Activated CD8-positive, alpha-beta T cell treated with anti-CD3 and anti-CD28 coated beads, Interleukin-2, amount 10 ng/mL, durations not matched to agents 7 days and 5 days (primary cell): ENCODE measurements at regions of chr16 and their contacts with region 1.

Region 1: DNA sequence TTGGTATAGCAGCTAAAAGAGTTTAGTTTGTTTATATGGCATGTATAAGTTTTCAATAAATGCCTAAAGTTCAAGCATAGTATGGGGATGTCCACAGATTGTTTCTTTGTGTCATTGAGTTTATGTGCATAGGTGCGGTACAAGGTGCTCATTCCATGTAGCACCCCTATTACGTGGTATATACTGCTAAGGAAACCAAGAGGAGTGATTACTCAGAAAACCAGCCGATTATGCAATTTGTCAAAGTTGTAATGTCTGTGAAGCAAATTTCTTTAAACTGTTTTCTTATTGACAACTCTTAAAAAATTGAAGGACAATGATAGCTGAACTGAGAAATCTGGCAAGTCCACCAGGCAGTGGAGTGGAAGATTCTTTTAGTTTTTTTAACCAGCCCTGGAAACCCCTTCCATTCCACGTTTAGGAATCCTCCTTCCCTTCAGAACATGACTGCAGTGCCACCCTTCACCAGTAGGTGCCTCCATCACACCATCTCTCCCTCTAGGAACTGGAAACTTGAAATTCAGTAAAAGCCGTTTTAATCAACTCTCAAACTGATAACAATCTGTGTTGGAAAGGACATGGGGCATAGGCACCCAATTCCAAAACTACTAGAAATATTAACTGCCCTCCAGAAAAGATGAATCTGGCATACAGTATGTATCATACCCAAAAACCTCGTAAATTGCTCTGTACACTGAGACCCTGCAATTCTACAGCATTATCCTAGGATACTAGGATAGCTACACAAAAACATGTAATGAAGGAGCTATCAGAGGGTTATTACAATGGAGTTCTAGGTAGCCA is 43.5 kb downstream of the REXO5 start:
- DNase-seq: peak; percentile 69
- ATAC-seq: peak; percentile 70
- H3K4me3 Mint-ChIP-seq: no peak overlapping the region
- H3K27ac Mint-ChIP-seq: no peak overlapping the region
- H3K4me1 Mint-ChIP-seq: peaks cover 41% of the 10 kb centered on the region
- H3K27me3 Mint-ChIP-seq: no peaks in the 10 kb centered on the region

Region 2: DNA sequence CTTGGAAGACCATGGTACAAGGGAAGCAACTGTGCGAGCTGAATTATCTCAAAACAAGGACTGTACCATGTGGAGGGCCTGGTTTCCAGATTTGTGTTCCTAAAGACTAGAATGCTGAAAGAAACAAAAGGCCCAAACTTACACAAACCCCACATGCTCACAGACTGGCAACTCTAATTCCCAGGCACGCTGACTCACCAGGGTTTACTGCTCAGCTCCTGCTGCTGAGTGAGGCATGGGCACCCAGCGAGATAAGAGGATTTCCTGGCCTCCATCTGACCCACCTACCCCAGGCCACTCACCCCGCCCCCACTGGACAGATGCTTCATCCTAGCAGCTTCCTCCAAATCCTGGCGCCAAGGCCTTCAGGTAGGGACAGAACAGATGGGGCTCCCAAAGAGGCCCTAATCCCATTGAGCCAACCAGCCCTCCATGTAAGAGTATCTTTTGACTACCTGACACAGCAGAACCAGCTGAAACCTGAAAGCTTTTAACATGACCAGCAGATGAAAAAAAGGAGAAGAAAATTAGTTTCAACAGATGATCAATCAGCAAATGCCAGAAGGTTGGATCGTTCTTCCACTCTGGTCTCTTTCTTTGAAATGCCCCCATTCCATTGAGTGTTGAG is 16.5 kb after region 1 on chr16:
- CTCF ChIA-PET with region 1: interaction called, 42 read pairs
- POLR2A ChIA-PET with region 1: no interaction called
- DNase-seq: no peak
- ATAC-seq: no peak
- H3K4me3 Mint-ChIP-seq: no peak overlapping the region
- H3K27ac Mint-ChIP-seq: peak overlapping the region; percentile 42
- H3K4me1 Mint-ChIP-seq: peaks cover 38% of the 10 kb centered on the region
- H3K27me3 Mint-ChIP-seq: no peaks in the 10 kb centered on the region

Region 3: DNA sequence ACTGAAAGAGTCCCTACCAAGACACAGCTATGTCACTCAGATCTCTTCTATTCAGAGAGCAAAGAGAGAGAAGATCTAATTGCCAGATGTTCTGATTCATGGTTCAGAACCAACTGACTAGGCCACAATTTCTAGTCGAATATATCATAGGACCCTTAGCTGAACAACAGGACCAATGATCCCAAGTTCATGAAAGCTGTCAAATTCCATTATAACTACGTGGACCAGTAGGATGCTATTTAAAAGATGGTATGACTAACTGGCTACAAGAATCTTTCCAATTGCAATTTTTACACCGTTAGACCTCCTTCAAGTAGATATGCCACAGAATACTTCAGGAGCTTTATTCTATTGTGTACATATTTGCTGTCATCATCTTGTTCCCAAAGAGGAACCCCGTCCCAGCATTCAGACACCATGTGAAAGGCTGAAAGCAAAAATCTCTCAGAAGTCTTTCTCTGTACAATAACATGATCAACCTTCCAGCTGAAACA is 24.3 kb after region 1 on chr16:
- CTCF ChIA-PET with region 1: interaction called, 42 read pairs
- POLR2A ChIA-PET with region 1: interaction called, 4 read pairs
- DNase-seq: no peak
- ATAC-seq: no peak
- H3K4me3 Mint-ChIP-seq: peak overlapping the region; percentile 70
- H3K27ac Mint-ChIP-seq: peak overlapping the region; percentile 97
- H3K4me1 Mint-ChIP-seq: peaks cover 78% of the 10 kb centered on the region
- H3K27me3 Mint-ChIP-seq: no peaks in the 10 kb centered on the region

Region 4: DNA sequence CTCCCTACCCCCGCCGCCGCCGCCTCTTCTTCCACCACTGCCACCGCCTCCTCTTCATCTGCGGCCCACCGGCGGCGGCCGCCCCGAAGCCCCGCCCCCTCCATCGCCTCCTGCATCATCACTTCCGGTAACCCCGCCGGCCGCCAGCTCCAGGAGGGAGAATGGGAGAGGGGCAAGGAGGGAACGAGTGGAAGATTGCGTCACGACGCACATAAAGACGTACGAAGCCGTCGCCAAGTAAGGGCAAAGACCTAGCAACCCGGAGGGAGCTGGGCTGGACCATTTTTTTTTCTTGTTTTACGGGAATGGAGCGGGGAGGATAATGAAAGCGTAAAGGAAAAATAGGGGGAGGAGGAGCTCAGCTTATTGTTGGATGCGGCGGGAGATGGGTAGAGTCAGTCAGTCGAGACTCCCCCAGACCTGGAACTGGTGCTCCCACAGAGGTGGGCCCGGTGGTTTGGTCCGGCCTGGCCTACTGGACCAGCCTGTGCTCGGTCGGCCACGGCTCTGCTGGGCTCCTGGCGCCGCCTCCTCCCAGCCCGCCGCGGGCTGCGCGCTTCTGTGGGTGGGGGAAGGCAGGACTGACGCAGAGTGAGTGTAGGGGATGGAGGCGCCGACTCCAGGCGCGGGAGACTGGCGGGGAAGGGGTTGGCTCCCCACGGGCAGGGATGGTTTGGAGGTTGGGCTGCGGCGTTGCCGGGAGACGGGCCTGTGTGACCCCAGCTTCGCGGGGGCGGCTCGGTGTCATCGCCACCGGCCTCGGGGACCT is 50.7 kb after region 1 on chr16 and contains the starts of genes DCUN1D3 and LYRM1:
- CTCF ChIA-PET with region 1: interaction called, 13 read pairs
- POLR2A ChIA-PET with region 1: interaction called, 7 read pairs
- DNase-seq: peak; percentile 93
- ATAC-seq: peak; percentile 81
- H3K4me3 Mint-ChIP-seq: peak within 1 kb of the TSS; percentile 83
- H3K27ac Mint-ChIP-seq: peak within 1 kb of the TSS; percentile 95
- H3K4me1 Mint-ChIP-seq: peaks cover 72% of the 10 kb centered on the region
- H3K27me3 Mint-ChIP-seq: no peaks in the 10 kb centered on the region
- total RNA-seq, gene DCUN1D3: 10.0 to 10.7 TPM
- total RNA-seq, gene LYRM1: 27.5 to 28.0 TPM

Region 5: DNA sequence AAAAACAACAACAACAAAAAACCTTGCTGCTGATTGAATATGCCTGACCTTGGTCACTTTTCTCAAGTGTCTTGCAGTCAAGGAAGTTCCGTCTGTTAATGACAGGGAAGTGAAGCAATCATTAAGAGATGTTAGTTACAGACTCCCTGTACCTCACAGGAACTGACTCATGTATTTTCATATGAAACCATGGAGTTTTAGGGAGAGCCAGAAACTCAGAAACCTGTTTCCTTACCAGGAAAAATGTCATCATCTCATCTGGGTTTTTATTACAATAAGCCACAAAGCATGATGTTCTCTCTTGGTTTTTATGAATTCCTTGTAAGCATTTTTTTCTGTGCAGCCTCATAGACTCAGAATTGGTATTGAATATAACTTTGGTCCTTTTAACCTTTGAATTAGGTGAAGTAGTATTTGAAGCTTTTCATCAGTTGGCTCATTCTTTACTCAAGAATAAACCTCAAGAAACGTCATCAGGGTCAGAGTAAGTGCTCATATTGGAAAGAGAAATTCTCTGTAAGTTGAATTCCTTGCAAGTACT is 61.1 kb after region 1 on chr16:
- CTCF ChIA-PET with region 1: interaction called, 14 read pairs
- POLR2A ChIA-PET with region 1: no interaction called
- DNase-seq: no peak
- ATAC-seq: peak; percentile 66
- H3K4me3 Mint-ChIP-seq: peak overlapping the region; percentile 48
- H3K27ac Mint-ChIP-seq: peak overlapping the region; percentile 79
- H3K4me1 Mint-ChIP-seq: peaks cover 63% of the 10 kb centered on the region
- H3K27me3 Mint-ChIP-seq: no peaks in the 10 kb centered on the region

Region 6: GRCh38 chr16:20944861-20945574 is 95.2 kb after region 1 on chr16:
- CTCF ChIA-PET with region 1: interaction called, 12 read pairs
- POLR2A ChIA-PET with region 1: interaction called, 3 read pairs
- DNase-seq: peak; percentile 81
- ATAC-seq: peak; percentile 77
- H3K4me3 Mint-ChIP-seq: no peak overlapping the region
- H3K27ac Mint-ChIP-seq: peak overlapping the region; percentile 69
- H3K4me1 Mint-ChIP-seq: peaks cover 40% of the 10 kb centered on the region
- H3K27me3 Mint-ChIP-seq: no peaks in the 10 kb centered on the region

Region 7: GRCh38 chr16:21083729-21084268 is 234.0 kb after region 1 on chr16:
- CTCF ChIA-PET with region 1: interaction called, 35 read pairs
- POLR2A ChIA-PET with region 1: no interaction called
- DNase-seq: peak; percentile 69
- ATAC-seq: peak; percentile 81
- H3K4me3 Mint-ChIP-seq: no peak overlapping the region
- H3K27ac Mint-ChIP-seq: no peak overlapping the region
- H3K4me1 Mint-ChIP-seq: no peaks in the 10 kb centered on the region
- H3K27me3 Mint-ChIP-seq: peaks cover 6% of the 10 kb centered on the region